ENCODE measurements at regions of chr2 and their contacts with region 1.

Region 1: GRCh38 chr2:231601349-231602229 is 8.9 kb downstream of the TEX44 start:
- DNase-seq: peak; percentile 82
- ATAC-seq: peak; percentile 76
- H3K4me3 ChIP-seq: no peak overlapping the region
- H3K27ac ChIP-seq: no peak overlapping the region; the same call in 1 of the 2 replicates
- H3K4me1 ChIP-seq: peaks cover 25 to 43% of the 10 kb centered on the region in 2 experiments
- H3K27me3 ChIP-seq: no peaks in the 10 kb centered on the region
- CTCF ChIP-seq: peak in 2 of 3 experiments; percentile 82 to 88; a peak in 4 of 6 replicates
- POLR2A ChIP-seq: no peak
- RAD21 ChIP-seq: no peak

Region 2: DNA sequence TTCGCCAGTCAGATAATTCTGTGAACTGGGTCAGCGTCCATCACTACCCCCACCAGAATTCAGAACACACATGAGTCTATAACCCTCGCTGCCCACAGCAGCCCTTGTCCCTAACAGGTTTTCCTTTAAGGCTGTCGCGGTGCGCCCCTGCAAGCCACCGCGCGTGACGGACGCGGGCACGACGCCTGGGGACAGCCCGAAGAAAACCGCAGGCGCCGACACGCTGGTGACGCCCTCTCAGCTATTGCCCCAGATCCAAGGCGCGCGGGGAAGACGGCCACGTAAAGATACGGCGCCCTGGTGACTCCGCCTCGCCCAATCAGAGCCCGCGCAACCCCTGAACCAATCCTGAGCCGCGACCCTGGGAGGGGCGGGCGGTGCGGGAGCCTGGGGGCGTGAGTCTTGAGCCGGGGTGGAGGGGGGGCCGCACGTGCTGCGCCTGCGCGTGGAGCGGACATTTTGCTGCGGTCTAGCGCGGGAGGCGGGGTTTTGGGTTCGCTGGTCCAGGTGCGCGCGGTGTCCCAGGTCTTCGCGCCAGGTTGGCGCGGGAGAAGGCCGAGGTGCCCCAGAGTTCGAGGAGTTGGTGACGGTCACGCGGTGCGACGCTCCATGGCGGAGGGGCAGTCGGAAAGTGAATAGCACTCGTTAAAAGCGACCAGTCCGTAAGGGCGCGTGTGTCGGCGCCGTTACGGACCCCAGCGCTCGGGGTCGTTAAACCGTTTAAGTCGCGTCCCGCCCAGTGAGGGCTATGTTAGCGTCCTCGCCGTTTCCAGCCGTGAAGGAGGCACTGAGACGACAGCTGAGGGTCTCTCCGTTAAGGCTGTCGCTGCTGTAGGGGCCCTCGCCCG is 87.3 kb before region 1 on chr2:
- CTCF ChIA-PET with region 1: interaction called, 12 read pairs
- POLR2A ChIA-PET with region 1: no interaction called
- RAD21 ChIA-PET with region 1: interaction called in 1 of 2 experiments, 4 read pairs
- intact Hi-C with region 1: loop called (anchors 1 kb)
- DNase-seq: peak; percentile 92
- ATAC-seq: peak; percentile 99
- H3K4me3 ChIP-seq: peak overlapping the region; percentile 53 to 87
- H3K27ac ChIP-seq: peak overlapping the region; percentile 61
- H3K4me1 ChIP-seq: peaks cover 7 to 23% of the 10 kb centered on the region in 2 experiments
- H3K27me3 ChIP-seq: no peaks in the 10 kb centered on the region
- CTCF ChIP-seq: no peak
- POLR2A ChIP-seq: peak; percentile 94
- RAD21 ChIP-seq: no peak

Region 3: GRCh38 chr2:231563378-231563961 is 38.1 kb before region 1 on chr2:
- CTCF ChIA-PET with region 1: interaction called, 31 read pairs
- POLR2A ChIA-PET with region 1: interaction called, 3 read pairs
- RAD21 ChIA-PET with region 1: interaction called, 8 read pairs
- intact Hi-C with region 1: loop called (anchors 1 kb)
- DNase-seq: peak; percentile 65
- ATAC-seq: peak; percentile 99
- H3K4me3 ChIP-seq: no peak overlapping the region
- H3K27ac ChIP-seq: no peak overlapping the region
- H3K4me1 ChIP-seq: no peaks in the 10 kb centered on the region
- H3K27me3 ChIP-seq: no peaks in the 10 kb centered on the region
- CTCF ChIP-seq: peak; percentile 65 to 77 (median 67)
- POLR2A ChIP-seq: no peak
- RAD21 ChIP-seq: peak; percentile 83

Region 4: DNA sequence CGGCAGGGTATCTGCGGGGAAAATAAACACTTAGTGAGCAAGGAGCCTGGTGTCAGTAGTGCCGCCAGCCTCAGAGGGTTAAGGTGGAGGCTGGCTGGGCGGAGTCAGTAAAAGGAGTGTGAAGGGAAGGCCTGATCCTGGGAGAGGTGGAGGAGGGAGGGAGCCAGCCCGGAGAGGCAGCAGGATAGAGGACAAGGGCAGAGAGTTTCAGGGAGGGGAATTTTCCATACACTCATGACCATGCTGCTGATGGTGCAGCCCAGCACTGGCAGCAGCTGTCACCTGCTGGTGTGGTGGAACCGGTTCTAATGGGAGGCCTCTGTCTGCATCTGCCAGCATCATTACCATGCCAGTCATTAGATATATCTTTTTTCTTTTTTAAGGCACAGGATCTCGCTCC is 11.0 kb before region 1 on chr2:
- CTCF ChIA-PET with region 1: interaction called, 12 read pairs
- POLR2A ChIA-PET with region 1: no interaction called
- RAD21 ChIA-PET with region 1: no interaction called
- intact Hi-C with region 1: no loop called
- DNase-seq: no peak
- ATAC-seq: peak; percentile 48; the same call in 1 of the 2 replicates
- H3K4me3 ChIP-seq: no peak overlapping the region
- H3K27ac ChIP-seq: no peak overlapping the region
- H3K4me1 ChIP-seq: peaks cover 5 to 6% of the 10 kb centered on the region in 2 experiments; a peak in 2 of 4 replicates
- H3K27me3 ChIP-seq: no peaks in the 10 kb centered on the region
- CTCF ChIP-seq: no peak
- POLR2A ChIP-seq: no peak
- RAD21 ChIP-seq: no peak

Measured in HCT116 (cell line).